ENCODE measurements at regions of chrX and their contacts with region 1.

Region 1: DNA sequence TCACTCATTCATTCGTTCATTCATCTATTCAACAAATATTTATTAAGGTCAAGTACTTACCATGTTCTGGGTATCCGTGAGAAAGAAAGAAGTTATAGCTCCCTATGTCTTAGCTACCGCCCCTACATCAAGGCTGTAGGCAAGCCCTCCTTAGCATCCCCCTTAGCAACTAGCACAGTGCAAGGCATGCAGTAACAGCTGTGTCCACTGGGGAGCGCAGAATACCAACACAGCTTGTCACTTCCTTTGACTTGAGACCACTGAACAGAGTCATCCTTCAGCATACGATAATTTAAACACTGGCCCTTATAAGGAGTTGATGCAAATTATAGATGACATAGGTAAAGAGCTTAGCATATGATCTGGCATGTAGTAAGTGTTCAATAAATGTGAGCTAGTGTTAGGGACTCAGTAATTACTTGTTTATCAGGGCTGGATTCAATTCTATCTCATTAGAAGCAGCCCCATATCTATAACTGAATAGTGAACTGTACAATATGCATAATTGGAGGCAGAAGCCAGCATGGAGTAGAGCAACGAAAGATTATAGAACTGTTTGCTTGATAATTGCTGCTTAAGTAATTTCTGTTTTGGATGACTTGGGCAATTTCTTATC is 8.7 kb downstream of the KIAA1210 start:
- H3K4me3 ChIP-seq: no peak overlapping the region
- H3K27ac ChIP-seq: no peak overlapping the region
- H3K4me1 ChIP-seq: no peaks in the 10 kb centered on the region
- CTCF ChIP-seq: peak; percentile 66; the same call in 1 of the 2 replicates

Region 2: GRCh38 chrX:119101168-119101567 is 17.7 kb before region 1 on chrX:
- CTCF ChIA-PET with region 1: interaction called, 11 read pairs
- POLR2A ChIA-PET with region 1: no interaction called
- H3K4me3 ChIP-seq: no peak overlapping the region
- H3K27ac ChIP-seq: no peak overlapping the region
- H3K4me1 ChIP-seq: no peaks in the 10 kb centered on the region
- CTCF ChIP-seq: no peak

Region 3: DNA sequence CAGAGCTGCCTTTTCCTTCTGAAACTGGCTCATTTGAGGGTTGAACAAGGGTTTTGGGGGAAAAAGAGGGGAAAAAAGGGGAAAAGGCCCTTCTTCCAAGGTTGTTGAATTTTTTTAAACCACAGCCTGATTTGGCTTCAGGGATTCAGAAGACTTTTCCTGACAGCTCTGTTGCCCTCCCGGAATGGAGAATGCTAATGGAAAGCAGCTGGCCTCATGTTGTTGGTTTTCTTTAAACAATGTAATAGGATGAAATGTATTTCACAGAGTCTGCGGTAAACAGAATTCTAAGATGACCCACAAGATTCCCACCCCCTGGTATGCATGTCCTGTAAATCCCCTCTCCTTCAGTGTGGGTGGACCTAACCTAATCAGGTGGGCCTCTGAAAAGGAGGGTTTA is 12.0 kb after region 1 on chrX:
- CTCF ChIA-PET with region 1: interaction called, 14 read pairs
- POLR2A ChIA-PET with region 1: interaction called, 8 read pairs
- H3K4me3 ChIP-seq: no peak overlapping the region
- H3K27ac ChIP-seq: no peak overlapping the region
- H3K4me1 ChIP-seq: no peaks in the 10 kb centered on the region
- CTCF ChIP-seq: no peak

Region 4: GRCh38 chrX:119145241-119145653 is 26.4 kb after region 1 on chrX:
- CTCF ChIA-PET with region 1: interaction called, 14 read pairs
- POLR2A ChIA-PET with region 1: no interaction called
- H3K4me3 ChIP-seq: no peak overlapping the region
- H3K27ac ChIP-seq: no peak overlapping the region
- H3K4me1 ChIP-seq: no peaks in the 10 kb centered on the region
- CTCF ChIP-seq: 0 out of 2 replicates have a peak, but pooled peaks have one; percentile 59

Region 5: GRCh38 chrX:119194621-119195020 is 75.7 kb after region 1 on chrX:
- CTCF ChIA-PET with region 1: interaction called, 38 read pairs
- POLR2A ChIA-PET with region 1: no interaction called
- H3K4me3 ChIP-seq: no peak overlapping the region
- H3K27ac ChIP-seq: no peak overlapping the region
- H3K4me1 ChIP-seq: no peaks in the 10 kb centered on the region
- CTCF ChIP-seq: peak; percentile 33; the same call in 1 of the 2 replicates

Region 6: GRCh38 chrX:119211649-119212014 is 92.7 kb after region 1 on chrX:
- CTCF ChIA-PET with region 1: interaction called, 24 read pairs
- POLR2A ChIA-PET with region 1: no interaction called
- H3K4me3 ChIP-seq: no peak overlapping the region
- H3K27ac ChIP-seq: no peak overlapping the region
- H3K4me1 ChIP-seq: no peaks in the 10 kb centered on the region
- CTCF ChIP-seq: no peak

Region 7: DNA sequence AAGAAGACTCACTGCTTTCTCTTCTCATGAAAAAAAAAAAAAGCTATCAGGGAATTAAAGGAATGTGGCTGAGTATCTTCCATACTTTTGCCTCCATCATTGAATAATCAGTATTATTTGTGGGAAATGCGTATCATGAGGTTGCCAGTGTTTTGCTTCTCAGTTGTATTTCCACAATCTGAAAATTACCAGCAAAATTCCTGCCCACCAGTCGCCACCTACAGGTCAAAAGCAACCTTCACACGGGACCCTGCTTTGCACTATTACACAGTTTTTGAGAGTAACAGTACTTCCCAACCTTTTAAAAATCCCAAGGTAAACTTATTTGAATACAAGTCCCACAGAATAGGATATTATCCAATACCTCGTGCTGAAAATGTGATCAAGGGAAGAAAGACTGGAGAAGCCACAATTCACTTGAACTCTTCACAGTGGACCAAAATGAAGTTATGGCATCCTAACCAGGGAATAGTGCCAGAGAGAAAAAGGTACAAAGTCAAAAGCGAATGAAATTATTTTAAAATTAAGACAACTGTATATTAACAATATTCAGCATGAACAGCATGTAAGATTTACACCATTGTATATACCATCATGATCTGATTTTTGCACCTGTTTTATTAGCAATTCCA is 147.6 kb after region 1 on chrX:
- CTCF ChIA-PET with region 1: interaction called, 18 read pairs
- POLR2A ChIA-PET with region 1: interaction called, 6 read pairs
- H3K4me3 ChIP-seq: no peak overlapping the region
- H3K27ac ChIP-seq: no peak overlapping the region
- H3K4me1 ChIP-seq: no peaks in the 10 kb centered on the region
- CTCF ChIP-seq: peak; percentile 42

Region 8: DNA sequence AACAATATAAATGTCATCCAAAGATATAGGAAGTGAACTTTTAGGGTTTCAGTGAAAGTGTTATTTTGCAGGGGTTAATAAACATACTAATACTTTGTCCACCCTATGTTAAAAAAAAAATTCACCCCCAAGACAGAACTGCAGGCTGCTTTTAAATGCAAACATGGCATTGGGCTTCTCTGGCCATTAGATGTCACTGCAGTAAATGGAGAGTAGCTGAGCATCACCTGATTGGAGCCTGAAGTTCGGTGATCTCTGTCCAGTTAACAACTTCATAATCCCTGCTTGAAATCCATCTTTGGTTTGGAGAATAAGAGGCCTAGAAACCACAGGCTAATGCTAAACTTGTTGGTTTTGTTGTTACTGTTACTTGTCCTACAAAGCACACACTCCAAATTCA is 299.0 kb after region 1 on chrX:
- CTCF ChIA-PET with region 1: no interaction called
- POLR2A ChIA-PET with region 1: no interaction called
- H3K4me3 ChIP-seq: no peak overlapping the region
- H3K27ac ChIP-seq: no peak overlapping the region
- H3K4me1 ChIP-seq: no peaks in the 10 kb centered on the region
- CTCF ChIP-seq: no peak